Spleen (tissue), 13 donors: ENCODE measurements at regions of chr16 and their contacts with region 1.

Region 1: DNA sequence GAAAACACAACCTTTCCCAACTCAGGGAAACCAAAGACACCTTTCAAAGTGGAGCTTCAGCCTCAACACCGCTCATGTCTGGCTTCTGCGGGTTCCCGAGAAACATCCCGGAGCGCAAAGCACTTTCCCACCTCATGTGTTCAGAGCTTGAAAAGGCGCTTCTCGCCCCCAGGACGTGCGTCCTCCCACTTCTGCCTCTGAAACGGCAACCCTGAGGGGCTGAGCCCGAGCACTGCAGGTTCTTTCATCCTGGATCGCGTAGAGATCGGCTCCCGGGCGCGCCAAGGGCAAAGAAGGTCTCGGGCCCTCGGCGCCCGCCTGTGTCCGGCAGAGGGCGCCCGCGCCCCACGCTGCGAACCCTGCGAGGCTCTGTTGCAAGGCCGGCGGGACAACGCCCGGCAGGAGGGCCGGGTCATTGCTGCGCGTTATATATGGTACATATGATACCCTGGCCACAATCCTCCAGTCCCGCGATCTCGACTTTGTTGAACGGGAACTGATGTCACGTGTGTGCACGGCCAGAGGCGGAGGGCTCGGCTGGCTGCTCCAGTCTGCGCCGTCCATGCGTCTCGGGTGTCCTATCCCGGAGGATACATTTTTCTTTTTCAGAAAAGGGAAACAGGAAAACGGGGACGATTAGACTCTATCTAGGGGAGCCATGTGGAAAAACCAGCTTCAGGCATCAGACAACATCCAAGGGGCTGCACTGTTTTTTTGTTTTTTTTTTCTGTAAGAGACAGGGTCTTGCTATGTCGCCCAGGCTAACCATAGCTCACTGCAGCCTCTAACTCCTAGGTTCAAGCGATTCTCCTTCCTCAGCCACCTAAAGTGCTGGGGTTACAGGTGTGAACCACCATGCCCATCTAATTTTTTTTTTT is 19.1 kb downstream of the COQ7 start:
- DNase-seq: peak; percentile 96
- H3K4me3 ChIP-seq: peak overlapping the region; percentile 18 to 63 (median 28)
- H3K27ac ChIP-seq: peak overlapping the region in 1 of 8 donors; percentile 46
- H3K4me1 ChIP-seq: peaks cover 6 to 17% (median 12%) of the 10 kb centered on the region in 6 donors
- H3K27me3 ChIP-seq: peaks cover 0 to 21% (median 0%) of the 10 kb centered on the region in 7 donors
- CTCF ChIP-seq: peak; percentile 85 to 99 (median 98)
- POLR2A ChIP-seq: no peak

Region 2: GRCh38 chr16:19179546-19180490 is 93.3 kb after region 1 on chr16:
- intact Hi-C with region 1: loop called (anchors 10 kb)
- DNase-seq: peak; percentile 83
- H3K4me3 ChIP-seq: no peak overlapping the region
- H3K27ac ChIP-seq: no peak overlapping the region
- H3K4me1 ChIP-seq: peaks cover 0 to 19% (median 3%) of the 10 kb centered on the region in 6 donors
- H3K27me3 ChIP-seq: peaks cover 0 to under 1% (median 0%) of the 10 kb centered on the region in 7 donors
- CTCF ChIP-seq: peak in 9 of 11 experiments; percentile 9 to 76 (median 51)
- POLR2A ChIP-seq: no peak

Region 3: DNA sequence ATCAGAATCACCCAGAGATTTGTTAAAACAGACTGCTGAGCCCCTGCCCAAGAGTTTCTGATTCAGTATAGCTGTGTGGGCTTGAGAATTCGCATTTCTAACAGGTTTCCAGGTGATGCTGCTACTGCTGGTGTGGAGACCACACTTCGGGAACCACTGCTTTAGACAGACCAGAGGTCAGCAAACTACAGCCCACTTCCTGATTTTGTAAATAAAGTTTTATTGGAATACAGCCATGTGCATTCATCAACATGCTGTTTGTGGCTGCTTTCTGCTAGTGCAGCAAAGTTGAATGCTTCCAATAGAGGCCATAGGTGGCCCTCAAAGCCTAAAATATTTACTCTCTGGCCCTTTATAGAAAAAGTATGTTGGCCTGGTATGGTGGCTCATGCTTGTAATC is 166.3 kb after region 1 on chr16:
- intact Hi-C with region 1: no loop called
- DNase-seq: no peak
- H3K4me3 ChIP-seq: no peak overlapping the region
- H3K27ac ChIP-seq: no peak overlapping the region
- H3K4me1 ChIP-seq: no peaks in the 10 kb centered on the region
- H3K27me3 ChIP-seq: peaks cover 0 to 4% (median 0%) of the 10 kb centered on the region in 7 donors
- CTCF ChIP-seq: no peak
- POLR2A ChIP-seq: no peak

Region 4: GRCh38 chr16:19265380-19265930 is 178.9 kb after region 1 on chr16:
- intact Hi-C with region 1: no loop called
- DNase-seq: no peak
- H3K4me3 ChIP-seq: no peak overlapping the region
- H3K27ac ChIP-seq: no peak overlapping the region
- H3K4me1 ChIP-seq: no peaks in the 10 kb centered on the region
- H3K27me3 ChIP-seq: no peaks in the 10 kb centered on the region
- CTCF ChIP-seq: no peak
- POLR2A ChIP-seq: no peak

Region 5: GRCh38 chr16:19375561-19376158 is 289.1 kb after region 1 on chr16:
- intact Hi-C with region 1: loop called (anchors 2 kb)
- DNase-seq: no peak
- H3K4me3 ChIP-seq: no peak overlapping the region
- H3K27ac ChIP-seq: no peak overlapping the region
- H3K4me1 ChIP-seq: no peaks in the 10 kb centered on the region
- H3K27me3 ChIP-seq: no peaks in the 10 kb centered on the region
- CTCF ChIP-seq: peak; percentile 42 to 81 (median 75)
- POLR2A ChIP-seq: no peak

Region 6: DNA sequence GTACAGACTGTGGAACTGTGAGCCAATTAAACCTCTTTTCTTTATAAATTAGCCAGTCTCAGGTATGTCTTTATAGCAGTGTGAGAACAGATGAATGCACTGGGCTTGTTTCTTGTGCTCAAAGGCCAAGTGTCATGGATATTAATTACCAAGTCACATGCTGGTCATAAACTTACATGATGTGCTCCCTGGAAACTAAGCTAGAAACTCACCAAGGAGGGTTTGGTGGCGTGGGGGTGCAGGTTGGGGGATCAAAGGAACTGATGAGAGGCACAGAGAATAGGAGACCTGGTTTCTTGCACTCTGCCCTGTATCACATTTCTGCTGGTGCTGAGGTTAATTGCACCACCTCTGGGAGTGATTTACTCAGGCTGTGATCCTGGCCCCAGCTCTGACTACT is 300.0 kb after region 1 on chr16:
- intact Hi-C with region 1: no loop called
- DNase-seq: no peak
- H3K4me3 ChIP-seq: no peak overlapping the region
- H3K27ac ChIP-seq: no peak overlapping the region
- H3K4me1 ChIP-seq: no peaks in the 10 kb centered on the region
- H3K27me3 ChIP-seq: peaks cover 0 to 59% (median 0%) of the 10 kb centered on the region in 7 donors
- CTCF ChIP-seq: no peak
- POLR2A ChIP-seq: no peak

Region 7: DNA sequence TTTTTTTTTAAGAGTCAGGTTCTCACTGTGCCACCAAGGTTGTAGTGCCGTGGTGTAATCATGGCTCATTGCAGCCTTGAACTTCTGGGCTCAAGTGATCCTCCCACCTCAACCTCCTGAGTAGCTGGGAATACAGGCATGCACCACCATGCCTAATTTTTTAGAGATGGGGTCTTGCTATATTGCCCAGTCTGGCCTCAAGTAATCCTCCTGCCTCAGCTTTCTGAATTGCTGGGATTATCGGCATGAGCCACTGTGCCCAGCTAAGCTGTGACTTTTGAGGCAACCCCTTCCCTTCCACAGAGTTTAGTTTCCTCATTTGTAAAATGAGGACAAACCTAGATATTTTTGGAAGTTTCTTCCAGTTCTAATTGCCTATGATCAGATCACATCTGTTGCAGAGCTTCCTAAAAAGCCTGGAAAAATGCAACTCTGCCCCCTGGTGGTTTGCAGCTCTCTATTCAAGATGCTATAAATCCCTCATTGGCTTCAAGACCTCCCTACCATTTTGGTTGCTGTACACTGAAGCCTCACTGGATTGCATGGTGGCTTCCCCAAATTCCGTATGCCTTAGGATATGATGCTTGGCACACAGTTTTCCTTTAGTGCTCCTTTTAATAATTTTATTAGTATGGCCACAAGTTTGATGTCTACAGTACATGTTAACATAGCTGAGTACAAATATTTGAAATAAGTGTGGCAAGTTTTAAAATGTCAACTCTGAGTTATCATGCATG is 416.0 kb after region 1 on chr16:
- intact Hi-C with region 1: loop called (anchors 5 kb)
- DNase-seq: peak; percentile 80
- H3K4me3 ChIP-seq: no peak overlapping the region
- H3K27ac ChIP-seq: no peak overlapping the region
- H3K4me1 ChIP-seq: no peaks in the 10 kb centered on the region
- H3K27me3 ChIP-seq: no peaks in the 10 kb centered on the region
- CTCF ChIP-seq: peak; percentile 31 to 85 (median 71)
- POLR2A ChIP-seq: no peak

Region 8: GRCh38 chr16:19520861-19521331 is 434.3 kb after region 1 on chr16:
- intact Hi-C with region 1: no loop called
- DNase-seq: no peak
- H3K4me3 ChIP-seq: peak overlapping the region; percentile 72 to 97 (median 84)
- H3K27ac ChIP-seq: peak overlapping the region; percentile 81 to 97 (median 92)
- H3K4me1 ChIP-seq: peaks cover 7 to 77% (median 52%) of the 10 kb centered on the region in 6 donors
- H3K27me3 ChIP-seq: no peaks in the 10 kb centered on the region
- CTCF ChIP-seq: no peak
- POLR2A ChIP-seq: no peak